PC-3 (cell line): ENCODE measurements at regions of chr1 and their contacts with region 1.

Region 1: GRCh38 chr1:27111626-27112573 is 43.0 kb downstream of the SLC9A1 start:
- DNase-seq: peak; percentile 97
- ATAC-seq: peak; percentile 95
- H3K4me3 ChIP-seq: no peak overlapping the region
- H3K27ac ChIP-seq: peak overlapping the region; percentile 77
- H3K4me1 ChIP-seq: peaks cover 31% of the 10 kb centered on the region
- H3K27me3 ChIP-seq: no peaks in the 10 kb centered on the region
- CTCF ChIP-seq: peak; percentile 58

Region 2: GRCh38 chr1:27044613-27045151 is 67.2 kb before region 1 on chr1:
- CTCF ChIA-PET with region 1: no interaction called
- POLR2A ChIA-PET with region 1: no interaction called
- intact Hi-C with region 1: no loop called
- DNase-seq: peak; percentile 95
- ATAC-seq: peak; percentile 94
- H3K4me3 ChIP-seq: peak overlapping the region; percentile 49; the same call in 1 of the 2 replicates
- H3K27ac ChIP-seq: no peak overlapping the region
- H3K4me1 ChIP-seq: peaks cover 4% of the 10 kb centered on the region; the same call in 1 of the 2 replicates
- H3K27me3 ChIP-seq: no peaks in the 10 kb centered on the region
- CTCF ChIP-seq: peak; percentile 93

Region 3: DNA sequence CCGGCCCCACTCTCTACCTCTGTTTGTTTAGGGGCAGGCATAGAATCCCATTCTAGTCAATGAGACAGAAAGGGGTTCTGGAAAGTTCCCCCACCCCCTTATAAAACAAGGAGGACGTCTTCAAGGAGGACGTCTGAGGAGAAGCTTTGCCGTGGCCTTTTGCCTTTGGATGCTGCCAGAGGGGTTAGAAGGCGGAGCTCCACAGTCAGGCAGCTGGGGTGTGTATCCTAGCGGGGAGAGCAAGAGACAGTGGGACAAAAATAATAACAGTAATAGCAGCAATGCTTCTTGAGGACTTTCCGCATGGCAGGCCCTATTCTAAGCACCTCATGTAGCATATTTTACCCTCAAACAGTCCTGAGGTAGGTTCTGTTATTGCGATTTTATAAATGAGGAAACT is 51.0 kb before region 1 on chr1:
- CTCF ChIA-PET with region 1: no interaction called
- POLR2A ChIA-PET with region 1: no interaction called
- intact Hi-C with region 1: no loop called
- DNase-seq: no peak
- ATAC-seq: no peak
- H3K4me3 ChIP-seq: no peak overlapping the region
- H3K27ac ChIP-seq: no peak overlapping the region
- H3K4me1 ChIP-seq: no peaks in the 10 kb centered on the region
- H3K27me3 ChIP-seq: no peaks in the 10 kb centered on the region
- CTCF ChIP-seq: no peak

Region 4: GRCh38 chr1:27122652-27123051 is 10.8 kb after region 1 on chr1:
- CTCF ChIA-PET with region 1: interaction called, 5 read pairs
- POLR2A ChIA-PET with region 1: no interaction called
- intact Hi-C with region 1: loop called (anchors 1 kb)
- DNase-seq: peak; percentile 90
- ATAC-seq: peak; percentile 100
- H3K4me3 ChIP-seq: no peak overlapping the region
- H3K27ac ChIP-seq: peak overlapping the region; percentile 47
- H3K4me1 ChIP-seq: peaks cover 14% of the 10 kb centered on the region
- H3K27me3 ChIP-seq: no peaks in the 10 kb centered on the region
- CTCF ChIP-seq: no peak

Region 5: GRCh38 chr1:27154991-27155781 is 43.3 kb after region 1 on chr1 and contains the start of gene SLC9A1:
- CTCF ChIA-PET with region 1: interaction called, 8 read pairs
- POLR2A ChIA-PET with region 1: interaction called, 10 read pairs
- intact Hi-C with region 1: loop called (anchors 1 kb)
- DNase-seq: peak; percentile 87
- ATAC-seq: peak; percentile 86
- H3K4me3 ChIP-seq: peak within 1 kb of the TSS; percentile 81
- H3K27ac ChIP-seq: peak within 1 kb of the TSS; percentile 48
- H3K4me1 ChIP-seq: peaks cover 43% of the 10 kb centered on the region
- H3K27me3 ChIP-seq: no peaks in the 10 kb centered on the region
- CTCF ChIP-seq: peak; percentile 83
- total RNA-seq, gene SLC9A1: 25.2 and 26.4 TPM in 2 replicates

Region 6: GRCh38 chr1:27163103-27163502 is 51.2 kb after region 1 on chr1:
- CTCF ChIA-PET with region 1: interaction called, 23 read pairs
- POLR2A ChIA-PET with region 1: no interaction called
- intact Hi-C with region 1: no loop called
- DNase-seq: peak; percentile 96
- ATAC-seq: peak; percentile 95
- H3K4me3 ChIP-seq: no peak overlapping the region
- H3K27ac ChIP-seq: peak overlapping the region; percentile 83
- H3K4me1 ChIP-seq: peaks cover 24% of the 10 kb centered on the region
- H3K27me3 ChIP-seq: no peaks in the 10 kb centered on the region
- CTCF ChIP-seq: no peak

Region 7: DNA sequence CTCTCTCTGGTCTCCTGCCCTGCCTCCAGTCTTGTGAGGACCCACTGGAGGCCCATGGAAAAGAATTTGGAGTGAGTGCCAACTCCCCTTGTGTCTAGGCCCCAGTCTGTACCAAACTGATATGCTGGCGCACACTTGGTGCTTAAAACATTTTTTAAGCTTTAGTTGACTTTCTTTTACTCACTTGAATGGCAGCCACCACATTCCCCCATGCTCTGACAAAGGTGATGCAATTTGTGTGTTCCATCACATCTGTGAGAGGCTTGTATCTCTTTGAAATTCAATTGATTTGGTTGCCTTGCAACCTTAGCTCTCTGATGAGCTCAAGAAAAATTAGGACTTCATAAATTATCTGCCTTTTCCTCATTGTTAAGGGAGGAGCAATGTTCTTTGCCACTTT is 92.0 kb after region 1 on chr1:
- CTCF ChIA-PET with region 1: interaction called, 3 read pairs
- POLR2A ChIA-PET with region 1: no interaction called
- intact Hi-C with region 1: loop called (anchors 2 kb)
- DNase-seq: no peak
- ATAC-seq: no peak
- H3K4me3 ChIP-seq: no peak overlapping the region
- H3K27ac ChIP-seq: no peak overlapping the region
- H3K4me1 ChIP-seq: no peaks in the 10 kb centered on the region
- H3K27me3 ChIP-seq: no peaks in the 10 kb centered on the region
- CTCF ChIP-seq: no peak

Region 8: DNA sequence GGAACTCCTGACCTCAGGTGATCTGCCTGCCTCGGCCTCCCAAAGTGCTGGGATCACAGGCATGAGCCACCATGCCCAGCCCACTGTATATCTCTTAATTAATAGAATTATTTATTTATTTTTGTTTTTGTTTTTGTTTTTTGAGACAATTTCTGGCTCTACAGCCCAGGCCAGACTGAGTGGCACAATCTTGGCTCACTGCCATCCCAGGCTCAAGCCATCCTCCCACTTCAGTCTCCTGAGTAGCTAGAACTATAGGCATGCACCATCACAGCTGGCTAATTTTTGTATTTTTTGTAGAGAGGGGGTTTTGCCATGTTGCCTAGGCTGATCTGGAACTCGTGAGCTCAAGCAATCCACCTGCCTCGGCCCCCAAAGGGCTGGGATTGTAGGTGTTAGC is 106.8 kb after region 1 on chr1:
- CTCF ChIA-PET with region 1: no interaction called
- POLR2A ChIA-PET with region 1: no interaction called
- intact Hi-C with region 1: no loop called
- DNase-seq: no peak
- ATAC-seq: no peak
- H3K4me3 ChIP-seq: no peak overlapping the region
- H3K27ac ChIP-seq: no peak overlapping the region
- H3K4me1 ChIP-seq: no peaks in the 10 kb centered on the region
- H3K27me3 ChIP-seq: no peaks in the 10 kb centered on the region
- CTCF ChIP-seq: no peak

Region 9: DNA sequence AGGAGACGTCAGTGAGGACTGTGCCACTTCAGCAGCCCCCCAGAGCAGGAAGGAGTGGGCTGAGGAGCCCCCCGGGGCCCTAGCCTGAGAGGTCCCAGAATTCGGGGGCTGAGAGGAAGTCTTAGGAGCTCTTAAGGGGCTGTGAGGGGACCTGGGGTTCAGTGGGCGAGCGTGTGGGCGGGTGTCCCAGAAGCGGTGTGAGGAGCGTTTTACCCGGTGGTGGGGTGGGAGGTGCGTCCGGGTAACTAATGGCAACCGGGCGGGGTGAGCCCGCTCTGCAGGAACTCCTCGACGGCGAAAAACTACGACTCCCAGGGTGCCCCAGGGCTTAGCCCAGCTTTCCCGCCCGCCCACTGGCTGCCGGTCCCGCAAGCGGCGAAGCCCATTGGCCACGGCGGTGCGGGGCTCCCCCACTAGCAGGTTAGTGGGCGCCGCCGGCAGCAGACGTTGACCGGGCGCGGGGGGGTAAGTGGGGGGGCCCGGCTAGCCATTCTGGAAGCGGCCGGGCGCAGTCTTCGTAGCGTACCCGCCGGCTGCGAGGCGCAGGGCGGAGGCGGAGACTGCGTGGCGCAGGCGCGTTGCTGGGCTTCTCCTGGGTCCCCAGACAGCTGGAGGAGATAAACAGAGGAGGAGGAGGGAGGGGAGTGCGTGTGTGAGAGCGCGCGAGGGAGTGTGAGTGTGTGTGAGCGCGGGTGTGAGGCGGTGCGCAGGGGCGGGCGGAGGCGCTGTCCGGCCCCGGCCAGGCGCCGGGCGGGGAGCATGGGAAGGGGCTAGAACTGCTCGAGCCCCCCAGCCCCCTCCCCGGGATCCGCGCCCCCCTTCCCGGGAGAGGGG is 122.4 kb after region 1 on chr1 and contains the start of gene WDTC1:
- CTCF ChIA-PET with region 1: interaction called, 3 read pairs
- POLR2A ChIA-PET with region 1: no interaction called
- intact Hi-C with region 1: loop called (anchors 1 kb)
- DNase-seq: peak; percentile 97
- ATAC-seq: peak; percentile 97
- H3K4me3 ChIP-seq: peak within 1 kb of the TSS; percentile 76
- H3K27ac ChIP-seq: no peak within 1 kb of the TSS
- H3K4me1 ChIP-seq: peaks cover 16% of the 10 kb centered on the region; the same call in 1 of the 2 replicates
- H3K27me3 ChIP-seq: no peaks in the 10 kb centered on the region
- CTCF ChIP-seq: no peak
- total RNA-seq, gene WDTC1: 23.7 and 28.6 TPM in 2 replicates